AG04449 (cell line): ENCODE measurements at regions of chr12 and their contacts with region 1.

Region 1: DNA sequence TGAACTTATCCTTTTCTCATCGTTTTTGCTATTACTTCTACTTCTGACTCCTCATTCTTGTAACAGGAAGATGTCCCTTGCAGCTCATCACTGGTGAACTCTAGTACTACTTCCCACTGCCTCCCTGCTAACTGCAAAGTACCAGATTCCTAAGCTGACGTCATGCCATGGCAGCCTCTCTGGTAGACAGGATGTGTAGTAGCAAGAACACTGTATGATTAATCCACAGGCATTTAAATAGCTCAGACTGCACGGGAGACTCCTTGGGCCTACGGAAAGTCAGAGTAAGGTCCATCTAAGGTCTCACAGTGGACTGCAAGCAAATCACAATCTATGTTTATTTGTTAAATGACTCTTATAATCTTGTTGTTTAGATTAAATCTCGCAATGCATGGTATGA is 43.5 kb downstream of the DNAI7 start:
- DNase-seq: peak; percentile 98
- H3K4me3 ChIP-seq: no peak overlapping the region
- CTCF ChIP-seq: no peak

Region 2: GRCh38 chr12:24997970-24998582 is 153.4 kb before region 1 on chr12:
- CTCF ChIA-PET with region 1: interaction called, 47 read pairs
- POLR2A ChIA-PET with region 1: no interaction called
- DNase-seq: peak; percentile 84
- H3K4me3 ChIP-seq: no peak overlapping the region
- CTCF ChIP-seq: no peak

Region 3: GRCh38 chr12:25110260-25110659 is 41.2 kb before region 1 on chr12:
- CTCF ChIA-PET with region 1: no interaction called
- POLR2A ChIA-PET with region 1: no interaction called
- DNase-seq: no peak
- H3K4me3 ChIP-seq: no peak overlapping the region
- CTCF ChIP-seq: no peak